Activated CD4-positive, alpha-beta T cell treated with anti-CD3 and anti-CD28 coated beads, Interleukin-2, amount 10 ng/mL, durations not matched to agents 24 days and 14 days (primary cell): ENCODE measurements at regions of chr19 and their contacts with region 1.

Region 1: GRCh38 chr19:55605207-55605636 is 225 bp upstream of the ZNF865 start:
- DNase-seq: peak; percentile 100
- H3K4me3 Mint-ChIP-seq: peak overlapping the region; percentile 85
- H3K27ac Mint-ChIP-seq: peak overlapping the region; percentile 93
- H3K4me1 Mint-ChIP-seq: peaks cover 46% of the 10 kb centered on the region
- H3K27me3 Mint-ChIP-seq: peaks cover 3% of the 10 kb centered on the region

Region 2: GRCh38 chr19:55476100-55476775 is 129.0 kb before region 1 on chr19 and contains the start of gene ZNF628:
- intact Hi-C with region 1: loop called (anchors 1 kb)
- DNase-seq: peak; percentile 99
- H3K4me3 Mint-ChIP-seq: peak within 1 kb of the TSS; percentile 93
- H3K27ac Mint-ChIP-seq: peak within 1 kb of the TSS; percentile 96
- H3K4me1 Mint-ChIP-seq: peaks cover 23% of the 10 kb centered on the region
- H3K27me3 Mint-ChIP-seq: no peaks in the 10 kb centered on the region
- total RNA-seq, gene ZNF628: 8.8 and 10.0 TPM in 2 replicates

Region 3: DNA sequence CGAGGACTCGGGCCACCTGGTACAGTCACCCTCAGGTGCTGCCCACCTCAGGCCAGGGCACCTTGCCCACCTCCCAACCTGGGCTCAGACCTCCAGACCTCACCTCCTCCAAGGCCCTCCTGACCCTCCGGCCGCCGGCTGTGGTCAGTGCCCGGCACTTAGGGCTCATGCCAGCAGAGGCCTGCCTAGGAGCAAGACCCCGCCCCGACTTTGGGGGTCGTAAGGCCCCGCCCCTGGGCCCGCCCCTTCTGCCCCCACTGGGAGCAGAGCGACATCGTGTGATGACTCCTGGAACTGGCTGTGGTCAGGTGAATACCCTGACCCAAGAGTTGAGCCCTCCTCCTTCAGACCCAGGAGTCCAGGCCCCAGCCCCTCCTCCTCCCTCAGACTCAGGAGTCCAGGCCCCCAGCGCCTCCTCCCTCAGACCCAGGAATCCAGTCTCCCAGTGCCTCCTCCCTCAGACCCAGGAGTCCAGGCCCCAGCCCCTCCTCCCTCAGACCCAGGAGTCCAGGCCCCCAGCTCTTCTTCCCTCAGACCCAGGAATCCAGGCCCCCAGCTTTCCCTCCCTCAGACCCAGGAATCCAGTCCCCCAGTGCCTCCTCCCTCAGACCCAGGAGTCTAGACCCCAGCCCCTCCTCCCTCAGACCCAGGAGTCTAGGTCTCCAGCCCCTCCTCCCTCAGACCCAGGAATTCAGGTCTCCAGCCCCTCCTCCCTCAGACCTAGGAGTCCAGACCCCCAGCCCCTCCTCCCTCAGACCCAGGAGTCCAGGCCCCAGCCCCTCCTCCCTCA is 68.1 kb before region 1 on chr19 and contains the start of gene SBK2:
- intact Hi-C with region 1: no loop called
- DNase-seq: no peak
- H3K4me3 Mint-ChIP-seq: no peak within 1 kb of the TSS
- H3K27ac Mint-ChIP-seq: no peak within 1 kb of the TSS
- H3K4me1 Mint-ChIP-seq: no peaks in the 10 kb centered on the region
- H3K27me3 Mint-ChIP-seq: no peaks in the 10 kb centered on the region
- total RNA-seq, gene SBK2: not detected in 2 replicates

Region 4: GRCh38 chr19:55586976-55587668 is 18.1 kb before region 1 on chr19:
- intact Hi-C with region 1: loop called (anchors 1 kb)
- DNase-seq: peak; percentile 98
- H3K4me3 Mint-ChIP-seq: peak overlapping the region; percentile 85
- H3K27ac Mint-ChIP-seq: no peak overlapping the region
- H3K4me1 Mint-ChIP-seq: peaks cover 14% of the 10 kb centered on the region
- H3K27me3 Mint-ChIP-seq: peaks cover 26% of the 10 kb centered on the region

Region 5: GRCh38 chr19:55624109-55625003 is 19.1 kb after region 1 on chr19 and contains the start of gene ZNF784:
- intact Hi-C with region 1: loop called (anchors 1 kb)
- DNase-seq: peak; percentile 98
- H3K4me3 Mint-ChIP-seq: peak within 1 kb of the TSS; percentile 96
- H3K27ac Mint-ChIP-seq: peak within 1 kb of the TSS; percentile 99
- H3K4me1 Mint-ChIP-seq: peaks cover 43% of the 10 kb centered on the region
- H3K27me3 Mint-ChIP-seq: peaks cover 13% of the 10 kb centered on the region
- total RNA-seq, gene ZNF784: 3.6 and 3.7 TPM in 2 replicates

Region 6: GRCh38 chr19:55670280-55671053 is 65.2 kb after region 1 on chr19:
- intact Hi-C with region 1: no loop called
- DNase-seq: no peak
- H3K4me3 Mint-ChIP-seq: no peak overlapping the region
- H3K27ac Mint-ChIP-seq: peak overlapping the region; percentile 39
- H3K4me1 Mint-ChIP-seq: peaks cover 20% of the 10 kb centered on the region
- H3K27me3 Mint-ChIP-seq: no peaks in the 10 kb centered on the region